ENCODE measurements at regions of chr1 and their contacts with region 1.

Region 1: GRCh38 chr1:247078261-247079140 is at the start of gene ZNF670:
- DNase-seq: peak; percentile 91 to 93
- ATAC-seq: peak; percentile 100
- H3K4me3 ChIP-seq: peak within 1 kb of the TSS; percentile 78 to 100 (median 90)
- H3K27ac ChIP-seq: peak within 1 kb of the TSS; percentile 75 to 85 (median 78)
- H3K4me1 ChIP-seq: peaks cover 8 to 14% of the 10 kb centered on the region in 2 donors
- H3K27me3 ChIP-seq: no peaks in the 10 kb centered on the region
- CTCF ChIP-seq: no peak
- POLR2A ChIP-seq: peak; percentile 55 to 64
- total RNA-seq, gene ZNF670: 0.49 to 1.3 (median 0.52) TPM

Region 2: GRCh38 chr1:246784621-246785493 is 293.6 kb before region 1 on chr1:
- in situ Hi-C with region 1: no loop called
- intact Hi-C with region 1: no loop called
- DNase-seq: no peak
- ATAC-seq: no peak
- H3K4me3 ChIP-seq: peak overlapping the region in 2 of 4 donors; percentile 9 to 33
- H3K27ac ChIP-seq: peak overlapping the region in 1 of 4 donors; percentile 29
- H3K4me1 ChIP-seq: peaks cover 14 to 19% of the 10 kb centered on the region in 2 donors
- H3K27me3 ChIP-seq: peaks cover 8 to 18% (median 11%) of the 10 kb centered on the region in 3 donors
- CTCF ChIP-seq: no peak
- POLR2A ChIP-seq: no peak

Region 3: GRCh38 chr1:246907472-246907871 is 171.0 kb before region 1 on chr1:
- in situ Hi-C with region 1: no loop called
- intact Hi-C with region 1: no loop called
- DNase-seq: no peak
- ATAC-seq: peak; percentile 42 to 89
- H3K4me3 ChIP-seq: no peak overlapping the region
- H3K27ac ChIP-seq: no peak overlapping the region
- H3K4me1 ChIP-seq: peaks cover 3 to 4% of the 10 kb centered on the region in 2 donors
- H3K27me3 ChIP-seq: no peaks in the 10 kb centered on the region
- CTCF ChIP-seq: peak in 4 of 5 experiments; percentile 24 to 54 (median 44)
- POLR2A ChIP-seq: no peak

Region 4: GRCh38 chr1:246931549-246932365 is 146.7 kb before region 1 on chr1 and contains the start of gene AHCTF1:
- in situ Hi-C with region 1: no loop called
- intact Hi-C with region 1: loop called (anchors 5 kb)
- DNase-seq: peak; percentile 94 to 97
- ATAC-seq: peak; percentile 95 to 96
- H3K4me3 ChIP-seq: peak within 1 kb of the TSS; percentile 89 to 100 (median 97)
- H3K27ac ChIP-seq: peak within 1 kb of the TSS; percentile 96 to 100 (median 99)
- H3K4me1 ChIP-seq: peaks cover 30 to 34% of the 10 kb centered on the region in 2 donors
- H3K27me3 ChIP-seq: no peaks in the 10 kb centered on the region
- CTCF ChIP-seq: peak in 1 of 5 experiments; percentile 10
- POLR2A ChIP-seq: peak; percentile 95 to 96
- total RNA-seq, gene AHCTF1: 21.7 to 28.5 (median 24.7) TPM